CD8-positive, alpha-beta memory T cell (primary cell): ENCODE measurements at regions of chr1 and their contacts with region 1.

Region 1: GRCh38 chr1:23530747-23531561 is at the start of gene E2F2:
- DNase-seq: peak; percentile 75 to 90 (median 78)
- H3K4me3 ChIP-seq: peak within 1 kb of the TSS; percentile 49
- H3K4me3 Mint-ChIP-seq: peak within 1 kb of the TSS; percentile 81 to 94 (median 86)
- H3K27ac ChIP-seq: peak within 1 kb of the TSS; percentile 25
- H3K27ac Mint-ChIP-seq: peak within 1 kb of the TSS; percentile 80 to 95 (median 87)
- H3K4me1 ChIP-seq: peaks cover 71% of the 10 kb centered on the region
- H3K4me1 Mint-ChIP-seq: peaks cover 70 to 81% (median 75%) of the 10 kb centered on the region in 3 donors
- H3K27me3 ChIP-seq: no peaks in the 10 kb centered on the region
- H3K27me3 Mint-ChIP-seq: no peaks in the 10 kb centered on the region
- total RNA-seq, gene E2F2: 19.1 to 19.6 TPM

Region 2: GRCh38 chr1:23484253-23485001 is 46.5 kb before region 1 on chr1:
- CTCF ChIA-PET with region 1: interaction called, 3 read pairs
- POLR2A ChIA-PET with region 1: interaction called, 11 read pairs
- DNase-seq: peak; percentile 86 to 94 (median 87)
- H3K4me3 ChIP-seq: peak overlapping the region; percentile 50
- H3K4me3 Mint-ChIP-seq: peak overlapping the region; percentile 87 to 95 (median 88)
- H3K27ac ChIP-seq: no peak overlapping the region
- H3K27ac Mint-ChIP-seq: peak overlapping the region in 6 of 8 donors; percentile 39 to 83 (median 67)
- H3K4me1 ChIP-seq: peaks cover 16% of the 10 kb centered on the region
- H3K4me1 Mint-ChIP-seq: peaks cover 14 to 20% (median 16%) of the 10 kb centered on the region in 3 donors
- H3K27me3 ChIP-seq: peaks cover 10% of the 10 kb centered on the region
- H3K27me3 Mint-ChIP-seq: peaks cover 17 to 27% of the 10 kb centered on the region in 2 donors

Region 3: DNA sequence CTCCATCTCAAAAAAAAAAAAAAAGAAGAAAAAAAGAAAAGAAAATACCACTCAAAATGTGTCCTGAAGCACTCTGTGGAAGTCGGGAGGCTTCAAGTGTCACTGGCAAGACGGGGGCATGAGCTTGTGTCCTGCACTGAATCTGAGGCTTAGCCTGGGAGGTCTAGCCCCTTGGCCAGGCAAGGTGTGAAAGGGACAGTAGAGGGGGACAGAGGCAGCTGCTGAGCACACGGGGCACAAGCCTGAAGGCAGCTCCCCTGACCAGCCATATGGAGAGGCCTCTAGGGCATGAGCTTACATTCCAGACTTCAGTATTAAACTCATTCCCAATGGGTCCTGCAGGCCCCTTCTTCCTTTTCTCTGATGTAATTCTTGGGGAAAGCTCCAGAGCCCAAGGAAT is 23.4 kb before region 1 on chr1:
- CTCF ChIA-PET with region 1: interaction called, 588 read pairs
- POLR2A ChIA-PET with region 1: interaction called, 4 read pairs
- DNase-seq: no peak
- H3K4me3 ChIP-seq: no peak overlapping the region
- H3K4me3 Mint-ChIP-seq: no peak overlapping the region
- H3K27ac ChIP-seq: no peak overlapping the region
- H3K27ac Mint-ChIP-seq: peak overlapping the region in 2 of 8 donors; percentile 22 to 38
- H3K4me1 ChIP-seq: no peaks in the 10 kb centered on the region
- H3K4me1 Mint-ChIP-seq: no peaks in the 10 kb centered on the region
- H3K27me3 ChIP-seq: no peaks in the 10 kb centered on the region
- H3K27me3 Mint-ChIP-seq: no peaks in the 10 kb centered on the region

Region 4: DNA sequence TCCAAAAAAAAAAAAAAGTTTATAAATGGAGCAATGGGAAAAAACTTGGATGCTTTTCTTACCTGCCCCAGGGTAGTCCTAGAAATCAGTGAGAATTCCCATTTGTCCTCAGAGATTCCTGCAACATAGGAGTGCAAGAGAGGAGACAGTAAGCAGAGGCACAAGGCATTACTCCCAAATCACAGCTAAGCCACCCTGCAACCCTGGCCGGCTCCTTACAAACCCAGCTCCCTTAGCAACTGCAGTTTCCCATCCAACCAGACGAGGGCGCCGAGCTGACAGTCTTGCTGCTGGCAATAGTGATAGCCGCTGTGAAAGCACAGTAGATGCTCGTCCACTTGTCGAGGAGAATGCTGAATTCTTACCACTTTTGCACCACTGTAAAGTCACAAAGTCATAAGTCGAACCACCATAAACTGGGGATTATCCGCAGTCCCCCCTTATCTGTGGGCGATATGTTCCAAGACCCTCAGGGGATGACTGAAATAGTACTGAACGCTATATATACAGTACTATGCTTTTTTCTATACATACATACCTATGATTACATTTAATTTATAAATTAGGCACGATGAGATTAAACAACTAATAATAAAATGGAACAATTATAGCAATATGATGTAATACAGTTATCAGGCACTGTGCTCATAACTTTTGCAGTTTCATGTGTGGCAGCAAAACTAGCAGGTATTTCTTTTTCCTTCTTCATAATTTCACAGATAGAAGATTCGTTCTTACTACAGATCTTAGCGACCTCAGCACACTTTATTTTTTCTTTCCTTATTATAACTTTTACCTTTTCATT is 241.3 kb after region 1 on chr1:
- CTCF ChIA-PET with region 1: no interaction called
- POLR2A ChIA-PET with region 1: no interaction called
- DNase-seq: peak; percentile 71 to 87 (median 75)
- H3K4me3 ChIP-seq: no peak overlapping the region
- H3K4me3 Mint-ChIP-seq: peak overlapping the region in 2 of 7 donors; percentile 43 to 47
- H3K27ac ChIP-seq: no peak overlapping the region
- H3K27ac Mint-ChIP-seq: peak overlapping the region in 4 of 8 donors; percentile 9 to 47 (median 32)
- H3K4me1 ChIP-seq: peaks cover 8% of the 10 kb centered on the region
- H3K4me1 Mint-ChIP-seq: peaks cover 16 to 25% (median 24%) of the 10 kb centered on the region in 3 donors
- H3K27me3 ChIP-seq: no peaks in the 10 kb centered on the region
- H3K27me3 Mint-ChIP-seq: no peaks in the 10 kb centered on the region